ENCODE measurements at regions of chr16 and their contacts with region 1.

Region 1: GRCh38 chr16:19094541-19095365 is 19.0 kb upstream of the ITPRIPL2 start:
- DNase-seq: peak; percentile 50
- H3K4me3 ChIP-seq: no peak overlapping the region
- H3K27ac ChIP-seq: no peak overlapping the region
- H3K4me1 ChIP-seq: peaks cover 0 to 6% (median 0%) of the 10 kb centered on the region in 4 donors
- H3K27me3 ChIP-seq: no peaks in the 10 kb centered on the region
- CTCF ChIP-seq: no peak
- EP300 ChIP-seq: no peak
- POLR2A ChIP-seq: no peak

Region 2: DNA sequence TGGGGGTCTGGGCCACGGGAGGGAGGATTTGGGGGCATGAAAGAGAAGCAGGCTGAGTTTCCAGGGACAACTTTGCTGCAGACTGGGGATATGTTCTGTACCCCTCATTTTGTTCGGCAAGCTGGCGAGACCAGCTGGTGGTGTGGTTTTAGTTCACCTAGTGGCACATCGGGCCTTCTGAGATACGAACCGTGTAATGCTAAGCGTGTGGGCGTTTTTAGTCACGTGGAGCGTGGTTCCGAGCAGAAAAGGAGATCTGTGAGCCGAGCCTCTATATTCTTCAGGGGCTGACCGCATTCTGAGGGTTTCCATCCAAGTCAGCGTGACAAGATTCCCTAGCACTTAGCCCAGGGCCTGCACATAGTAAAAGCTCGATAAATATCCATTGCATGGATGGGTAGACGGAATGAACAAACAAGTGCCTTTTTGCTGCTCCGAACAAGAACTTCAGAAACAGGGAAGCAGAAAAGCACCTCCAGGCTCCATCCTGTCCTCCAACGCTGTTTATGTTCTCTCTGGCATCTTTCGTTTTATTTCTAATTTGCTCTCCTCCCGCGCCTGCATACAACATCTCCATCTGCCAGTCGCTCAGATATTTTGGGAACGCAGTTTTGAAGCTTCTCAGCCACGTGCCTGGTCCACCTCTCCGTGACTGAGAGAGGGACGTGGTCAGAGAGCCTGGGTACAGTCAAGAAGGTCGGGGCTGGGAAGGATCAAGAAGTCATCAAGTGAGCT is 79.1 kb after region 1 on chr16:
- in situ Hi-C with region 1: loop called in 2 of 4 experiments (anchors 5 to 10 kb)
- intact Hi-C with region 1: no loop called
- DNase-seq: no peak
- H3K4me3 ChIP-seq: no peak overlapping the region
- H3K27ac ChIP-seq: no peak overlapping the region
- H3K4me1 ChIP-seq: peaks cover 0 to 9% (median 7%) of the 10 kb centered on the region in 4 donors
- H3K27me3 ChIP-seq: peaks cover 6% of the 10 kb centered on the region
- CTCF ChIP-seq: no peak
- EP300 ChIP-seq: no peak
- POLR2A ChIP-seq: no peak

Measured in transverse colon (tissue), 4 donors.